H1 (cell line): ENCODE measurements at regions of chr10 and their contacts with region 1.

Region 1: DNA sequence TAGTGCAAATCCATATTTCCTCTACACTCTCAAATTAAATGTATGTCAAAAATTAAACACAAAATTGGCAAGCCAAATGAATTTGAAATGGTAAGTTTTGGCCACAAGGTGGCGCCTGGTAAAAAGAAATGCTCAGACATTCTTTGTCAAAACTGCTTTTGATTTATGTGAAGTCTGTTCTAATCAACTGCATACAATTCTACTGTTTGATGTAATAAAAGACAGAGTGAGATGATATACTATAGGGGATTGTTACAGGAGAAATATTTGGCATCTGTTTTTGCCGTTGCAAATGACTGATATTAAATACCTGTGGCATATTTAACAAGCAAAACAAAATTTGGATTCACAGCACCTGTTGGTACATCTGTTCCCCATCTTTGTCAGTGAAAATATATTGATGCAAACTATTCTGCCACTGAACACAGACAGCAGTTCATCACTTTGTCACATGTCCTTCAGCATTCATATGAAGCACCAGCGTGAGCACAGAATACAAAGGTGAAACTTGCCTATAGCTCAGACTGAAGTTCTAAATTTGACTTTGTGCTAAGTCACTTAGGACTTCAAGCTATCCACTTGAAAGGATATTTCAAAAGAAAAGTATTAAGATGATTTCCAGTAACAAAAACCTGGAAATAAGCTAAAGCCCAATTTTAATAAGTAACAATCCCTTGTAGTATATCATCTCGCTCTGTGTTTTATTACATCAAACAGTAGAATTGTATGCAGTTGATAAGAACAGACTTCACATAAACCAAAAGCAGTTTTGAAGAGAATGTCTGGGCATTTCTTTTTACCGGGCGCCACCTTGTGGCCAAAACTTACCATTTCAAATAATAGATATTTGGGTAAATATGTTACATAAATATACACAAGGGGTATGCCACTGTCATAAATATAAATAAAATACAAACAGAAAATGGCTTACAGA is 10.2 kb upstream of the CH25H start:
- DNase-seq: peak in 1 of 2 experiments; percentile 60
- H3K4me3 ChIP-seq: no peak overlapping the region
- H3K27ac ChIP-seq: no peak overlapping the region
- H3K4me1 ChIP-seq: peaks cover 0 to 6% (median 0%) of the 10 kb centered on the region in 4 experiments; a peak in 2 of 7 replicates
- H3K27me3 ChIP-seq: no peaks in the 10 kb centered on the region
- CTCF ChIP-seq: peak in 2 of 3 experiments; percentile 56; a peak in 2 of 4 replicates
- EP300 ChIP-seq: no peak
- POLR2A ChIP-seq: no peak
- RAD21 ChIP-seq: peak; percentile 65 to 69

Region 2: GRCh38 chr10:88835096-88835909 is 382.0 kb before region 1 on chr10:
- CTCF ChIA-PET with region 1: interaction called, 19 read pairs
- POLR2A ChIA-PET with region 1: no interaction called
- DNase-seq: peak in 1 of 2 experiments; percentile 80
- H3K4me3 ChIP-seq: no peak overlapping the region
- H3K27ac ChIP-seq: no peak overlapping the region
- H3K4me1 ChIP-seq: no peaks in the 10 kb centered on the region
- H3K27me3 ChIP-seq: no peaks in the 10 kb centered on the region
- CTCF ChIP-seq: peak; percentile 69 to 95 (median 87)
- EP300 ChIP-seq: no peak
- POLR2A ChIP-seq: no peak
- RAD21 ChIP-seq: peak; percentile 97 to 98

Region 3: GRCh38 chr10:89029785-89030437 is 187.4 kb before region 1 on chr10:
- CTCF ChIA-PET with region 1: interaction called, 100 read pairs
- POLR2A ChIA-PET with region 1: no interaction called
- DNase-seq: peak in 1 of 2 experiments; percentile 71
- H3K4me3 ChIP-seq: no peak overlapping the region
- H3K27ac ChIP-seq: no peak overlapping the region
- H3K4me1 ChIP-seq: peaks cover 3 to 11% (median 6%) of the 10 kb centered on the region in 4 experiments; a peak in 5 of 7 replicates
- H3K27me3 ChIP-seq: no peaks in the 10 kb centered on the region
- CTCF ChIP-seq: peak; percentile 61 to 83 (median 82)
- EP300 ChIP-seq: no peak
- POLR2A ChIP-seq: no peak
- RAD21 ChIP-seq: peak; percentile 92

Region 4: GRCh38 chr10:89228962-89229361 is 11.6 kb after region 1 on chr10:
- CTCF ChIA-PET with region 1: interaction called, 21 read pairs
- POLR2A ChIA-PET with region 1: no interaction called
- DNase-seq: no peak
- H3K4me3 ChIP-seq: no peak overlapping the region
- H3K27ac ChIP-seq: no peak overlapping the region
- H3K4me1 ChIP-seq: no peaks in the 10 kb centered on the region
- H3K27me3 ChIP-seq: no peaks in the 10 kb centered on the region
- CTCF ChIP-seq: no peak
- EP300 ChIP-seq: no peak
- POLR2A ChIP-seq: no peak
- RAD21 ChIP-seq: no peak

Region 5: GRCh38 chr10:89241486-89242344 is 24.4 kb after region 1 on chr10:
- CTCF ChIA-PET with region 1: interaction called, 29 read pairs
- POLR2A ChIA-PET with region 1: no interaction called
- DNase-seq: no peak
- H3K4me3 ChIP-seq: no peak overlapping the region
- H3K27ac ChIP-seq: no peak overlapping the region
- H3K4me1 ChIP-seq: peaks cover 3 to 16% (median 10%) of the 10 kb centered on the region in 4 experiments; a peak in 5 of 7 replicates
- H3K27me3 ChIP-seq: no peaks in the 10 kb centered on the region
- CTCF ChIP-seq: no peak
- EP300 ChIP-seq: no peak
- POLR2A ChIP-seq: no peak
- RAD21 ChIP-seq: no peak

Region 6: GRCh38 chr10:89419548-89419947 is 202.2 kb after region 1 on chr10:
- CTCF ChIA-PET with region 1: interaction called, 14 read pairs
- POLR2A ChIA-PET with region 1: no interaction called
- DNase-seq: no peak
- H3K4me3 ChIP-seq: no peak overlapping the region
- H3K27ac ChIP-seq: no peak overlapping the region
- H3K4me1 ChIP-seq: peaks cover 0 to 10% (median 3%) of the 10 kb centered on the region in 4 experiments; a peak in 6 of 7 replicates
- H3K27me3 ChIP-seq: peaks cover 0 to 20% (median 15%) of the 10 kb centered on the region in 4 experiments; a peak in 6 of 7 replicates
- CTCF ChIP-seq: peak in 2 of 3 experiments; percentile 43 to 57; a peak in 2 of 4 replicates
- EP300 ChIP-seq: no peak
- POLR2A ChIP-seq: no peak
- RAD21 ChIP-seq: peak; percentile 32 to 46; a peak in 3 of 4 replicates